Activated B cell treated with CpG ODN at 0.5 μM for 24 hours (primary cell): ENCODE measurements at regions of chr4 and their contacts with region 1.

Region 1: GRCh38 chr4:82462415-82462831 is 32.0 kb downstream of the ENOPH1 start:
- DNase-seq: peak; percentile 66
- ATAC-seq: peak; percentile 99
- H3K4me3 Mint-ChIP-seq: no peak overlapping the region
- H3K27ac Mint-ChIP-seq: no peak overlapping the region
- H3K4me1 Mint-ChIP-seq: peaks cover 22% of the 10 kb centered on the region
- H3K27me3 Mint-ChIP-seq: no peaks in the 10 kb centered on the region
- CTCF ChIP-seq: no peak

Region 2: DNA sequence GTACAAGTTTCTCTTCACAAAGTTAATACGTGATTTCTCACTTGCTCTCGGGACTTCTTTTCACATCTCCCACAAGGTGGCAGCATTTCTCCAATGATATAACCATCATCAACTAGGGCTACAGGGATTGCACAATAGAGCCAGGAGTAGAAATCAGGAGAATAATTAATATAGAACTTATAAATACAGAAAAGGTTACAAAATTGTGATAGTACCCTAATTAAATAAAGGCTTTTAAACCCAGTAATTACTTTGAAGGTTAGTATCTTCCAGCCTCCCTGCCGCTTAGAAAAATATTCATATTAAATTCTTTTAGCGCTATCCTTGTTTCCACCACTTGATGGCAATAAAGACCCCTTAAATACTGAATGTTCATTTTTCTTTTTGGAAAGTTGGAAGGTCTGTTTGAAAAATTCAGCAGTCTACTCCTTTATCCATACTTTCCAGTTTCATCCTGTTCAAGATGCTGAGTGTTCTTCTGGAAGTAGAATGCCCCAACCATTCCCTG is 1056.5 kb before region 1 on chr4:
- CTCF ChIA-PET with region 1: no interaction called
- POLR2A ChIA-PET with region 1: no interaction called
- intact Hi-C with region 1: loop called (anchors 5 kb)
- DNase-seq: no peak
- ATAC-seq: peak; percentile 81
- H3K4me3 Mint-ChIP-seq: no peak overlapping the region
- H3K27ac Mint-ChIP-seq: no peak overlapping the region
- H3K4me1 Mint-ChIP-seq: peaks cover 3% of the 10 kb centered on the region
- H3K27me3 Mint-ChIP-seq: peaks cover 3% of the 10 kb centered on the region
- CTCF ChIP-seq: peak; percentile 93

Region 3: DNA sequence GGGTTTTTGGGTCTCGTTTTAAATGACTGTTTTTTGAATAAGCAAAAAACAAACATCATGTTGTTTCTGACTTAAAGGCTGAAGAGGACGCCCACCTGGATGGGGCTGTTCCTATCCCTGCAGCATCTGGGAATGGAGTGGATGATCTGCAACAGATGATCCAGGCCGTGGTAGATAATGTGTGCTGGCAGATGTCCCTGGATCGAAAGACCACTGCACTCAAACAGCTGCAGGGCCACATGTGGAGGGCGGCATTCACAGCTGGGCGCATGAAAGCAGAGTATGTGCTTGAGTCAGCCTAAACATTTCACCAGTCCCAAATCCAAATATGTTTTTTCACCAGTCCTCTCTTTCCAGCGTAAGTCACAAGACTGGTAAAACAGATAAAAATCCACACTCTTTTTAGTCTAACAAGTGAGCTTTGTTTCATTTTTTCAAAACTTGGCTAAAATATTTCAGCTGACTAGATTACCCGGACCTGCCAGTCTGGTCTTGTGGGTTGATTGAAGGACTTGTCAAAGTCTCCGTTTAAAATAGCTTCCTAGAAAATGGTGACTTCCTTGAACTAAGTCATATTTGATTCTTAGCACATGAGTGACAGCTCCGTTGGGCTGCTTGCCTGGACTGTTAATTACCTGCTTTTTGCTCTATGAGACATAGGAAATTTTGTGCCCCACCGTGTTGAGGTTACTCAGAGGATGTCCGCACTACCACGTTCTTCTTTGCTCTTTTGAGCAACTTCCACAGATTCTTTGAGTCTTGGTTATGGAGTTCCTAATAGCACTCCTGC is 11.3 kb before region 1 on chr4:
- CTCF ChIA-PET with region 1: no interaction called
- POLR2A ChIA-PET with region 1: no interaction called
- intact Hi-C with region 1: no loop called
- DNase-seq: no peak
- ATAC-seq: no peak
- H3K4me3 Mint-ChIP-seq: no peak overlapping the region
- H3K27ac Mint-ChIP-seq: no peak overlapping the region
- H3K4me1 Mint-ChIP-seq: no peaks in the 10 kb centered on the region
- H3K27me3 Mint-ChIP-seq: no peaks in the 10 kb centered on the region
- CTCF ChIP-seq: no peak

Region 4: GRCh38 chr4:82484996-82485783 is 22.8 kb after region 1 on chr4:
- CTCF ChIA-PET with region 1: no interaction called
- POLR2A ChIA-PET with region 1: no interaction called
- intact Hi-C with region 1: no loop called
- DNase-seq: no peak
- ATAC-seq: no peak
- H3K4me3 Mint-ChIP-seq: no peak overlapping the region
- H3K27ac Mint-ChIP-seq: no peak overlapping the region
- H3K4me1 Mint-ChIP-seq: no peaks in the 10 kb centered on the region
- H3K27me3 Mint-ChIP-seq: no peaks in the 10 kb centered on the region
- CTCF ChIP-seq: no peak

Region 5: GRCh38 chr4:82823062-82823461 is 360.6 kb after region 1 on chr4:
- CTCF ChIA-PET with region 1: no interaction called
- POLR2A ChIA-PET with region 1: no interaction called
- intact Hi-C with region 1: loop called (anchors 5 kb)
- DNase-seq: no peak
- ATAC-seq: no peak
- H3K4me3 Mint-ChIP-seq: no peak overlapping the region
- H3K27ac Mint-ChIP-seq: no peak overlapping the region
- H3K4me1 Mint-ChIP-seq: no peaks in the 10 kb centered on the region
- H3K27me3 Mint-ChIP-seq: no peaks in the 10 kb centered on the region
- CTCF ChIP-seq: no peak

Region 6: GRCh38 chr4:82890901-82891706 is 428.7 kb after region 1 on chr4 and contains the start of gene SEC31A:
- CTCF ChIA-PET with region 1: interaction called, 3 read pairs
- POLR2A ChIA-PET with region 1: interaction called, 5 read pairs
- intact Hi-C with region 1: loop called (anchors 2 kb)
- DNase-seq: peak; percentile 97
- ATAC-seq: peak; percentile 92
- H3K4me3 Mint-ChIP-seq: peak within 1 kb of the TSS; percentile 93
- H3K27ac Mint-ChIP-seq: peak within 1 kb of the TSS; percentile 94
- H3K4me1 Mint-ChIP-seq: peaks cover 34% of the 10 kb centered on the region
- H3K27me3 Mint-ChIP-seq: no peaks in the 10 kb centered on the region
- CTCF ChIP-seq: no peak
- total RNA-seq, gene SEC31A: 154 and 172 TPM in 2 replicates

Region 7: GRCh38 chr4:83012687-83013419 is 550.4 kb after region 1 on chr4:
- CTCF ChIA-PET with region 1: no interaction called
- POLR2A ChIA-PET with region 1: no interaction called
- intact Hi-C with region 1: loop called (anchors 5 kb)
- DNase-seq: peak; percentile 97
- ATAC-seq: peak; percentile 92
- H3K4me3 Mint-ChIP-seq: peak overlapping the region; percentile 94
- H3K27ac Mint-ChIP-seq: peak overlapping the region; percentile 92
- H3K4me1 Mint-ChIP-seq: peaks cover 44% of the 10 kb centered on the region
- H3K27me3 Mint-ChIP-seq: no peaks in the 10 kb centered on the region
- CTCF ChIP-seq: no peak

Region 8: GRCh38 chr4:83484500-83485461 is 1022.4 kb after region 1 on chr4 and contains the start of gene ABRAXAS1:
- CTCF ChIA-PET with region 1: no interaction called
- POLR2A ChIA-PET with region 1: no interaction called
- intact Hi-C with region 1: loop called (anchors 10 kb)
- DNase-seq: peak; percentile 96
- ATAC-seq: peak; percentile 97
- H3K4me3 Mint-ChIP-seq: peak within 1 kb of the TSS; percentile 93
- H3K27ac Mint-ChIP-seq: peak within 1 kb of the TSS; percentile 94
- H3K4me1 Mint-ChIP-seq: peaks cover 19% of the 10 kb centered on the region
- H3K27me3 Mint-ChIP-seq: no peaks in the 10 kb centered on the region
- CTCF ChIP-seq: no peak
- total RNA-seq, gene ABRAXAS1: 23.5 and 24.2 TPM in 2 replicates